ENCODE measurements at regions of chr2 and their contacts with region 1.

Region 1: DNA sequence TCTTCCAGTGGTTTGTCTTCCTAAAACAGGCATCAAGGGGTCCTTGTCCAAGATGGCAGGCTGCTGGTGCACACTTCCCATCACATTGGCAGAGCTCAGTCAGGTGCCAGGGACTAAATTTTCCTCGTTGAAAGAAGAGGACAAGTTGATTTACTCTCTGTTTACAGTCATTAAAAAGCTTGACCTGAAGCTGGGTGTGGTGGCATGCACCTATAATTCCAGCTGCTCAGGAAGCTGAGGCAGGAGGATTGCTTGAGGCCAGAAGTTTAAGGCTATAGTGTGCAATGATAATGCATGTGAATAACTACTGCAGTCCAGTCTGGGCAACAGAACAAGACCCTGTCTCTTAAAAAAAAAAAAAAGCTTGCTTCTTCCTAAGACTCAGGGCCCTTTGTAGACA is 3.6 kb upstream of the PLB1 start:
- DNase-seq: no peak
- ATAC-seq: no peak
- H3K4me3 ChIP-seq: no peak overlapping the region
- H3K4me3 Mint-ChIP-seq: no peak overlapping the region
- H3K27ac ChIP-seq: no peak overlapping the region
- H3K27ac Mint-ChIP-seq: no peak overlapping the region
- H3K4me1 ChIP-seq: no peaks in the 10 kb centered on the region
- H3K4me1 Mint-ChIP-seq: peaks cover 0 to 1% (median 0%) of the 10 kb centered on the region in 7 donors
- H3K27me3 ChIP-seq: no peaks in the 10 kb centered on the region
- H3K27me3 Mint-ChIP-seq: peaks cover 0 to 13% (median 0%) of the 10 kb centered on the region in 5 donors

Region 2: GRCh38 chr2:28544919-28545589 is 52.8 kb after region 1 on chr2:
- CTCF ChIA-PET with region 1: interaction called, 10 read pairs
- POLR2A ChIA-PET with region 1: no interaction called
- intact Hi-C with region 1: no loop called
- DNase-seq: peak in 1 of 9 donors; percentile 31
- ATAC-seq: peak; percentile 69
- H3K4me3 ChIP-seq: no peak overlapping the region
- H3K4me3 Mint-ChIP-seq: peak overlapping the region in 1 of 10 donors; percentile 63
- H3K27ac ChIP-seq: no peak overlapping the region
- H3K27ac Mint-ChIP-seq: peak overlapping the region in 2 of 9 donors; percentile 15 to 82
- H3K4me1 ChIP-seq: peaks cover 0 to 34% of the 10 kb centered on the region in 2 donors
- H3K4me1 Mint-ChIP-seq: peaks cover 0 to 38% (median 9%) of the 10 kb centered on the region in 7 donors
- H3K27me3 ChIP-seq: no peaks in the 10 kb centered on the region
- H3K27me3 Mint-ChIP-seq: no peaks in the 10 kb centered on the region